Activated CD8-positive, alpha-beta T cell treated with anti-CD3 and anti-CD28 coated beads, Interleukin-2, amount 10 ng/mL, durations not matched to agents 7 days and 5 days (primary cell): ENCODE measurements at regions of chr16 and their contacts with region 1.

Region 1: DNA sequence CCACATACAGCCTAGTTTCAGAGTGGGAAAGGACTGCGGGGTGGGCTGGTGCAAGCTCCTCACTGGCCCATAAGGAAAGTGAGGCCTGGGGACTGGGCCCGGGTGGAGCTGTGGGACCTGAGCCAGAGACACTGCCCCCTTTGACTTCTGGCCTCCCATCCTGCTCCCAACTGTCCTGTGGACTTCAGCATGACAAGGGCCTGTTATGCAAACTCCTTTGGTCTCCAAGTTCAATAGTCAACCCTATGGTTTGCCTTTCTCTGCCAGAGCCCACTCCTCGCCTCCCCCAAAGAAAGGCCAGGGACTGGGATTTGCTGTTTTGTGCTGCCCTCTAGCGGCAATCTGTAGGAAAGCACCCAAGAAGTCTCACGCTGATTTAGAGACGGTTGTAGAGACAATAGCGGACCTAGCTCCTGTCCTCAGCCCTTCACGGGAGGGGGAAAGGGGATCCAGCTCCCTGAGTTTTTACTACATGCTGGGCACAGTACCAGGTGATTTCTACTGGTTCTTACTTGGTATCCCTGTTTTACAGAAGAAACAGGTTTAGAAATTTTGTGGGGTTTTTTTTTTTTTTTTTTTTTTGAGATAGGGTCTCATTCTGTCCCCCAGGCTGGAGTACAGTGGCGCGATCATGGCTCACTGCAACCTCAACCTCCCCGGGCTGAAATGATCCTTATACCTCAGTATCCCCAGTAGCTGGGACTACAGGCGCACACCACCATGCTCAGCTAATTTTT is 1.2 kb upstream of the TLCD3B start:
- DNase-seq: peak; percentile 81
- ATAC-seq: peak; percentile 66
- H3K4me3 Mint-ChIP-seq: no peak overlapping the region
- H3K27ac Mint-ChIP-seq: no peak overlapping the region
- H3K4me1 Mint-ChIP-seq: peaks cover 15% of the 10 kb centered on the region
- H3K27me3 Mint-ChIP-seq: peaks cover 44% of the 10 kb centered on the region

Region 2: DNA sequence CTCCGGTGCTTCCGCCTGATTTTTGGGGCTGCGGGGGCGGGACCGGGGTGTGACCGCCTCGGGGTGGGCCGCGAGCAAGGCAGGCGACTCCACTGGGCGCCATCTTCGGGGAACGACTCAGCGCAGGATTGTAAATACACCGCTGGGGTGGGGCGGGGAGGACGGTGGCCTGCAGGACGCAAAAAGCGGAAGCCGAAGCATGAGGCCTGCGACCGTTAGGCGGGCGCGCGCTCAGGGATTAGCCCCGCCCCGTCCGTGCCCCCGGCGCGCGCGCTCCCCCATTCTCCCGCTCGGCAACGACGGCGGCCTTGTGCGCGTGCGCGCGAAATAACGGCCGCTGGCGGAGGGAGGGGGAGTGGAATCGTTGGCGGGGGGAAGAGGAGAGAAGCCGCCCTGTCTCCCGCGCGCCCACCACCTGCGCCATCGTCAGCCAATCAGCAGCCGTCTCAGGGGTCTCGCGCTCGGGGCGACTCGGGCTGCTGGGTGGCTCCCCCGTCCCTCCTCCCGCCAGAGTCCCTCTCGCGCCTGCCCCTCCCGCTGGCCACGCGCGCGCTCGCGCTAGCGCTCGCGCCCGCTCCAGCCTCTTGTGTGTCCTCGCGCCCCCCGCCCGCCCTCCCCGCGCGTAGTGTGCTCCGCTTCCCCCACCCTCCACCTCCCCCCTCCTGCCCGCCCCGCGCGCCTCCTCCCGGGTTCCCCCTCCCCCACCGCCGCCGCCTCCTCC is 226.7 kb before region 1 on chr16:
- CTCF ChIA-PET with region 1: interaction called, 16 read pairs
- POLR2A ChIA-PET with region 1: no interaction called
- DNase-seq: peak; percentile 99
- ATAC-seq: peak; percentile 72
- H3K4me3 Mint-ChIP-seq: peak overlapping the region; percentile 89
- H3K27ac Mint-ChIP-seq: peak overlapping the region; percentile 93
- H3K4me1 Mint-ChIP-seq: peaks cover 49% of the 10 kb centered on the region
- H3K27me3 Mint-ChIP-seq: no peaks in the 10 kb centered on the region

Region 3: GRCh38 chr16:30018731-30019158 is 13.5 kb before region 1 on chr16:
- CTCF ChIA-PET with region 1: interaction called, 21 read pairs
- POLR2A ChIA-PET with region 1: no interaction called
- DNase-seq: no peak
- ATAC-seq: no peak
- H3K4me3 Mint-ChIP-seq: no peak overlapping the region
- H3K27ac Mint-ChIP-seq: no peak overlapping the region
- H3K4me1 Mint-ChIP-seq: peaks cover 13% of the 10 kb centered on the region
- H3K27me3 Mint-ChIP-seq: peaks cover 16% of the 10 kb centered on the region